Calu3 (cell line): ENCODE measurements at regions of chr17 and their contacts with region 1.

Region 1: GRCh38 chr17:30124273-30124796 is 7.7 kb downstream of the NSRP1 start:
- DNase-seq: no peak
- H3K4me3 Mint-ChIP-seq: no peak overlapping the region
- H3K27ac Mint-ChIP-seq: no peak overlapping the region
- H3K4me1 Mint-ChIP-seq: no peaks in the 10 kb centered on the region
- H3K27me3 Mint-ChIP-seq: no peaks in the 10 kb centered on the region
- CTCF ChIP-seq: no peak

Region 2: GRCh38 chr17:30236766-30237165 is 112.4 kb after region 1 on chr17:
- CTCF ChIA-PET with region 1: interaction called, 15 read pairs
- intact Hi-C with region 1: loop called (anchors 10 kb)
- DNase-seq: peak; percentile 81
- H3K4me3 Mint-ChIP-seq: peak overlapping the region; percentile 77
- H3K27ac Mint-ChIP-seq: no peak overlapping the region
- H3K4me1 Mint-ChIP-seq: no peaks in the 10 kb centered on the region
- H3K27me3 Mint-ChIP-seq: peaks cover 76% of the 10 kb centered on the region
- CTCF ChIP-seq: peak; percentile 40

Region 3: DNA sequence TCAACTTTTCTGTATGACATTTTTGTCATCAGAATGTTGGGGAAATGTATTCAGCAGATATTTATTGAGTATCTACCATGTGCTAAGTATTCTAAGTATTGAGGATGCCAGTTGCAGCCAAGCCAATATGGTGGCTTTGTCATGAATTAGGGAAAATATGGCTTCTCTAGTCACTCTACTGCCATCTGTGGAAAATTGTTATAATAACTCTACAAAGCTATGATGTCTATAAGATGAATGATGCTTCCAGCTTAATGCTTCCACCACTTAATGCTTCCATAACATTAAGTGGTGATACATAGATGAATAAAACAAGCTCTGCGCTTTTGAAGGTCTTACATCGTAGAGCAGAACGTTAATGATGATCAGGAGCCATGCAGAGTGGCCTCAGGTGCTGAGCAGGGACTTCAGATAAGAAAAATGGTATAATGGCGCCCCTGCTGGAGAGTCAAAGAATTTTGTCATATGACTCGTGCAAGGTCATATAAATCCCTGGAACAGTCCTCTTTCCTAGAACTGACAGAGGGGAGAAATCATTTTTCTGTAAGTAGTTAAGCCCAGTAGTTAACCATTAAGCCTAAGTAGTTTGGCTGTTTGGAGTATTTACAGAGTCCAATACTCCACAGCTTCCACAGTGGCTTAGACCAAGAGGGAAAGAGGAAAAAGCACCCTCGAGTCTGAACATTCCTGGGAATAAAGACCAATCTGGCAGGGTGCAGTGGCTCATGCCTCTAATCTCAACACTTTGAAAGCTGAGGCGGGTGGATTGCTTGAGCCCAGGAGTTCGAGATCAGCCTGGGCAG is 212.2 kb after region 1 on chr17:
- CTCF ChIA-PET with region 1: interaction called, 8 read pairs
- intact Hi-C with region 1: loop called (anchors 2 kb)
- DNase-seq: peak; percentile 63
- H3K4me3 Mint-ChIP-seq: no peak overlapping the region
- H3K27ac Mint-ChIP-seq: no peak overlapping the region
- H3K4me1 Mint-ChIP-seq: peaks cover 16% of the 10 kb centered on the region
- H3K27me3 Mint-ChIP-seq: no peaks in the 10 kb centered on the region
- CTCF ChIP-seq: peak; percentile 71